ENCODE measurements at regions of chr17 and their contacts with region 1.

Region 1: DNA sequence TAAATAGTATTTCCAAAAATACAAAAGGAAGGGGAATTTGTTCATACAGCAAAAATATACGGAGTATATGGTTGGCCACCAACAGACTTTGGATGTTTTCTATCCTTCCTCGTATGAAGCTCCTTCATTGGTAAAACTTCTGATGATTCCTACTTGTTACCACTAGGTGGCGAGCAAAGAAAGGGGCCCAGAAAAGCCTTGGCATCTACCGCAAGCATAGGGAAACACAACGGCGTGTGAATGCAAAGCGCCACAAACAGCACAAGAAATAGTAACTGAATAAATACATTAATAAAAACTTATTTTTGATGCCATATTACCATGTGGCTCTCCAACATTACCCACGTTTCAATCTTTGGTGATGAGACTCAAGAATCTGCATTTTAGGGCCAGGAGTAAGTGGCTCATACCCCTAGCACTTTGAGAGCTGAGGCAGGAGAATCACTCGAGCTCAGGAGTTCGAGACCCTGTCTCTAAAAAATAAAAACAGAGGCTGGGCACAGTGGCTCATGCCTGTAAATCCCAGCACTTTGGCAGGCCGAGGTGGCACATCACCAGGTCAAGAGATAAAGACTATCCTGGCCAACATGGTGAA is 34.5 kb downstream of the YWHAE start:
- DNase-seq: peak; percentile 56 to 74
- H3K4me3 ChIP-seq: no peak overlapping the region
- H3K27ac ChIP-seq: peak overlapping the region; percentile 47; the same call in 1 of the 2 replicates
- H3K4me1 ChIP-seq: peaks cover 40% of the 10 kb centered on the region
- H3K27me3 ChIP-seq: no peaks in the 10 kb centered on the region
- CTCF ChIP-seq: peak; percentile 97

Region 2: GRCh38 chr17:1323336-1323735 is 42.2 kb before region 1 on chr17:
- CTCF ChIA-PET with region 1: no interaction called
- POLR2A ChIA-PET with region 1: no interaction called
- intact Hi-C with region 1: no loop called
- DNase-seq: no peak
- H3K4me3 ChIP-seq: no peak overlapping the region
- H3K27ac ChIP-seq: no peak overlapping the region
- H3K4me1 ChIP-seq: no peaks in the 10 kb centered on the region
- H3K27me3 ChIP-seq: peaks cover 57% of the 10 kb centered on the region
- CTCF ChIP-seq: no peak

Region 3: GRCh38 chr17:1379930-1380313 is 14.4 kb after region 1 on chr17:
- CTCF ChIA-PET with region 1: interaction called, 10 read pairs
- POLR2A ChIA-PET with region 1: interaction called, 21 read pairs
- intact Hi-C with region 1: no loop called
- DNase-seq: no peak
- H3K4me3 ChIP-seq: no peak overlapping the region
- H3K27ac ChIP-seq: no peak overlapping the region
- H3K4me1 ChIP-seq: 0 out of 2 replicates have a peak, but pooled peaks cover 6% of the 10 kb centered on the region
- H3K27me3 ChIP-seq: no peaks in the 10 kb centered on the region
- CTCF ChIP-seq: no peak

Region 4: GRCh38 chr17:1413281-1413791 is 47.8 kb after region 1 on chr17:
- CTCF ChIA-PET with region 1: interaction called, 6 read pairs
- POLR2A ChIA-PET with region 1: interaction called, 13 read pairs
- intact Hi-C with region 1: no loop called
- DNase-seq: peak; percentile 83 to 84
- H3K4me3 ChIP-seq: no peak overlapping the region
- H3K27ac ChIP-seq: no peak overlapping the region
- H3K4me1 ChIP-seq: peaks cover 14% of the 10 kb centered on the region
- H3K27me3 ChIP-seq: no peaks in the 10 kb centered on the region
- CTCF ChIP-seq: no peak

Region 5: GRCh38 chr17:1455797-1456599 is 90.5 kb after region 1 on chr17 and contains the start of gene CRK:
- CTCF ChIA-PET with region 1: interaction called, 3 read pairs
- POLR2A ChIA-PET with region 1: interaction called, 4 read pairs
- intact Hi-C with region 1: loop called (anchors 5 kb)
- DNase-seq: peak; percentile 84 to 99
- H3K4me3 ChIP-seq: peak within 1 kb of the TSS; percentile 98
- H3K27ac ChIP-seq: peak within 1 kb of the TSS; percentile 59
- H3K4me1 ChIP-seq: peaks cover 27% of the 10 kb centered on the region
- H3K27me3 ChIP-seq: no peaks in the 10 kb centered on the region
- CTCF ChIP-seq: no peak
- total RNA-seq, gene CRK: 57.1 and 57.9 TPM in 2 replicates

Region 6: DNA sequence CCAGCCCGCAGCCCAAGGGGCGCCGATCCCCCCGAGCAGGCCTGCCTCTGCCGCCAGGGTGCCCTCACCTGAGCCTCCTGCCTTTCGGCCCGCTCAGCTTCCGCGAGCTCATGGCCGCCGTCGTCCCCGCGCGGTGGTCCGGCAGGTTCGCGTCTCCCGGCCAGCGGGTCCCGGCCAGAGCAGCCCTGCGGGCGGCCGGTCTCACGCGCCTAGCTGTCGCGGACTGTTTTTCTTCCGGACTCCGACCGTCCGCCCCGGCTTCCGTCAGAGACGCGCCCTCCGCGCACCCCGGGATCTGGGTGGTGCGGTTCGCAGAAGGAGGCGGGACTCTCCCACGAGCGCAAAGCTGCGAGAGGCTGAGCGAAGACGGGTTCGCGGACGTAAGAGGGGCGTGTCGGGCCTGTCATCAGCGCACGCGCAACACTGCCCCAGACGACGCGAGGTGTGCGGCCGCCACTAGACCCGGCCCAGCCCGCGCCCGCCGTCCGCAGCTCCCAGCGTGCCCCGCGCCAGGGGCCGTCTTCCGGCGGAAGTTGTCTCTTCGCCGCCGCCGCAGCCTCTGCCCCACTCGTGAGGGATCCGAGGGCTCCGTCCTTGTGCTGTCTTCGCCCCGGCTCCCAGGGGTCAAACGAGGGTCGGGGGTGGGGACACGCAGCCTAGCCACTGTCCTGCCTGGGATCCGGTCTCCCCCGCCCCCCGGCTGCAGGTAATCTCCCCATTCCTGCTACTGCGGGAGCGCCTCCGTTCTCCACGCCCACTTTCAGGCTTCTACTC is 151.0 kb after region 1 on chr17 and contains the start of gene INPP5K:
- CTCF ChIA-PET with region 1: interaction called, 32 read pairs
- POLR2A ChIA-PET with region 1: interaction called, 3 read pairs
- intact Hi-C with region 1: loop called (anchors 1 kb)
- DNase-seq: peak; percentile 92 to 99
- H3K4me3 ChIP-seq: peak within 1 kb of the TSS; percentile 72
- H3K27ac ChIP-seq: peak within 1 kb of the TSS; percentile 63
- H3K4me1 ChIP-seq: peaks cover 13% of the 10 kb centered on the region
- H3K27me3 ChIP-seq: no peaks in the 10 kb centered on the region
- CTCF ChIP-seq: no peak
- total RNA-seq, gene INPP5K: 41.9 and 42.9 TPM in 2 replicates